ENCODE measurements at regions of chr17 and their contacts with region 1.

Region 1: DNA sequence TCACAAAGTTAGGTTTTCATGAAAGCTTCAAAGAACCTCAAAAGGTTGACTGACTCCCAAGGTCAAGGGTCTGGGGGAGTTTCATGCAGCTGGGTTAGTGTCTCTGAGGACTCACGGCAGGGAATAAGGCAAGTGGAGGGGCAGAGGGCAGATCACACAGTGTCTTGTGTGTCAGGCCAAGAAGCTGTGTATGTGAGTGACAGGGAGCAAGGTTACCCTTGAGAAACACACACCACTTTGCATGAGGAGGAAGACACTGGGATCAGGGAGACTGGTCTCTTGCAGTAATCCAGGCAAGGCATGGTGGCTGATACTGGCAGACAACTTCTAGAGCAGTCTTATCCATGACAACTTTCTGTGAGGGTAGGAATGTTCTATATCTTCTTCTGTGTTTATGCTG is 6.3 kb downstream of the FLOT2 start:
- DNase-seq: no peak
- H3K4me3 ChIP-seq: no peak overlapping the region
- H3K27ac ChIP-seq: no peak overlapping the region
- H3K4me1 ChIP-seq: peaks cover 8 to 33% (median 20%) of the 10 kb centered on the region in 4 donors
- H3K27me3 ChIP-seq: no peaks in the 10 kb centered on the region
- CTCF ChIP-seq: no peak
- EP300 ChIP-seq: no peak
- POLR2A ChIP-seq: no peak

Region 2: DNA sequence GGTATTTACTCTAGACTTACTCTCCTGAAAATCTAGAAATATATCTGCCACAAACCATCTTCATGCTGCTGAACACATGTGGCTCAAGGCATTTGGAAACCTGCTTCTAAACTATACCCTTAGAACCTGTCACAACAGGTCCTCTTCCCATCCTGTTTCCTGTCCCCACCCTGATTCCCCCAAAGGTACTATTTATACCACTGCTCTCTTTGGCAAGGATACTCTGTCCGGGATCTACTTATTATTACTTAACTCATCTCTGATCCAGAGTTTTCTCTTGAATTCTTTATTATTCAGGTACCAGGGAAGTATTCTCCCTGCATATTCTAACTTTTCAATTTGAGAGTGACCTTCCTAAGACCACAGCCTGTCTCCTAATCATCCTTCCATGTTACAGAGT is 114.0 kb before region 1 on chr17:
- in situ Hi-C with region 1: loop called in 1 of 4 experiments (anchors 25 kb)
- intact Hi-C with region 1: loop called (anchors 1 kb)
- DNase-seq: no peak
- H3K4me3 ChIP-seq: no peak overlapping the region
- H3K27ac ChIP-seq: no peak overlapping the region
- H3K4me1 ChIP-seq: peaks cover 0 to 7% (median 0%) of the 10 kb centered on the region in 4 donors
- H3K27me3 ChIP-seq: no peaks in the 10 kb centered on the region
- CTCF ChIP-seq: no peak
- EP300 ChIP-seq: no peak
- POLR2A ChIP-seq: no peak

Measured in transverse colon (tissue), 4 donors.